Activated CD8-positive, alpha-beta memory T cell treated with anti-CD3 and anti-CD28 coated beads, Interleukin-2, amount 10 ng/mL, durations not matched to agents 7 days and 5 days (primary cell): ENCODE measurements at regions of chr19 and their contacts with region 1.

Region 1: DNA sequence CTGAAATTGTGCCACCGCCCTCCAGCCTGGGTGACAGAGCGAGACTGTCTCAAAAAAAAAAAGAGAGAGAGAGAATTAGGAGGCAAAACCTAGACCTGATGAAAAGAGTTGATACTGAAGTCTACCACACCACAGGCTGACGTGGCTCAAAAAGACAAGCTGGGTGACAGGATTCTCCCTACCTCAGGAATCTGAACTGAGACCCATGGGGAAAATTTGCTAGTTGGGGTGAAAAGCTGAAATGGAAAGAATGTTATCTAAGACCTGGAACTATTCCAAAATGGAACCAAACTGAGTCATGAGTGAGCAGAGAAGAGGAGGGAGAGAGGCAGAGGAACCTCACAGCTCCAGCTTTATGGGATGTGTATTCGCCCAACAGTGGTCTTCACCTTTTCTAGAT is 11.7 kb downstream of the SMG9 start:
- DNase-seq: no peak
- ATAC-seq: no peak
- H3K4me3 Mint-ChIP-seq: no peak overlapping the region
- H3K27ac Mint-ChIP-seq: no peak overlapping the region
- H3K4me1 Mint-ChIP-seq: peaks cover 31% of the 10 kb centered on the region
- H3K27me3 Mint-ChIP-seq: no peaks in the 10 kb centered on the region

Region 2: GRCh38 chr19:43754503-43755255 is 11.7 kb after region 1 on chr19 and contains the start of gene SMG9:
- CTCF ChIA-PET with region 1: interaction called, 48 read pairs
- DNase-seq: peak; percentile 98
- ATAC-seq: peak; percentile 87
- H3K4me3 Mint-ChIP-seq: peak within 1 kb of the TSS; percentile 89
- H3K27ac Mint-ChIP-seq: peak within 1 kb of the TSS; percentile 98
- H3K4me1 Mint-ChIP-seq: peaks cover 65% of the 10 kb centered on the region
- H3K27me3 Mint-ChIP-seq: no peaks in the 10 kb centered on the region
- total RNA-seq, gene SMG9: 62.3 to 74.7 TPM

Region 3: DNA sequence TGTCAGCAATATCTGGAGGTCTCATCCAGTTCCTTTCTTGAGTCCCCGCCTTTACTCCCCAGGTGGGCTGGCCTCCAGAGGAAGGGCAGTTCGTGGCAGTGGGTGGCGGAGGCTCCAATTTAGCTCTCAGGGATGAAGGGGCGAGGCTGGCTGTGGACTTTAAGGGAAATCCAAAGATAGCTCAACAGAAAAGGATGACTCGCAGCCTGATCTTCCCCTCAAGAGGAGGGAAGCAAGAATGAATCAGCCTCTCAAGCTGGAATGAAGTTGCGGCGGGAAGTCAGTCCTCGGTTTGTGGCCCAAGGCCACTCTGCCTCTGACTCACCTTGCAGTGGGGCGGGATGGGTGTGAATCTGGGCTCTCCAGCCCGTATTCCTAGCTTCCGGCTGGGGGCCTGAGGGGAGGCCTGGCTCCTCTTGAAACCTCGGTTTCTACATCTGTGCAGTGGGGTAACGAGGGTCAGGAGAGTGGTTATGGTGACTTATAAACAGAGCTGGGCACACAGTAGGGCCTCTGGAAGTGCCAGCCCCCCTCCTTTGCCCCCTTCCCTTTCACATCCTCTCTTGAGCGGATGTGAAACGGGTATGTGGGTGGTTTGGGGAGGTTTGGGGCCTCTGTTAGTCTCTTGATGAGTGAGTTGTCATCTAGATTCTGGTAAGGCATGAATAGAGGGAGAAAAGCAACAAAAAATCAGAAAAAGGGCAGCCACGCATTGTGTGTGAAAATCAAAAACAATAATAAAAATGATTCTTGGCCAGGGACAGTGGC is 22.3 kb after region 1 on chr19:
- CTCF ChIA-PET with region 1: interaction called, 71 read pairs
- DNase-seq: peak; percentile 96
- ATAC-seq: peak; percentile 88
- H3K4me3 Mint-ChIP-seq: peak overlapping the region; percentile 49
- H3K27ac Mint-ChIP-seq: peak overlapping the region; percentile 94
- H3K4me1 Mint-ChIP-seq: peaks cover 55% of the 10 kb centered on the region
- H3K27me3 Mint-ChIP-seq: no peaks in the 10 kb centered on the region

Region 4: GRCh38 chr19:43784981-43785808 is 42.2 kb after region 1 on chr19:
- CTCF ChIA-PET with region 1: interaction called, 68 read pairs
- DNase-seq: peak; percentile 76
- ATAC-seq: peak; percentile 46
- H3K4me3 Mint-ChIP-seq: peak overlapping the region; percentile 25
- H3K27ac Mint-ChIP-seq: peak overlapping the region; percentile 87
- H3K4me1 Mint-ChIP-seq: peaks cover 41% of the 10 kb centered on the region
- H3K27me3 Mint-ChIP-seq: peaks cover 7% of the 10 kb centered on the region

Region 5: DNA sequence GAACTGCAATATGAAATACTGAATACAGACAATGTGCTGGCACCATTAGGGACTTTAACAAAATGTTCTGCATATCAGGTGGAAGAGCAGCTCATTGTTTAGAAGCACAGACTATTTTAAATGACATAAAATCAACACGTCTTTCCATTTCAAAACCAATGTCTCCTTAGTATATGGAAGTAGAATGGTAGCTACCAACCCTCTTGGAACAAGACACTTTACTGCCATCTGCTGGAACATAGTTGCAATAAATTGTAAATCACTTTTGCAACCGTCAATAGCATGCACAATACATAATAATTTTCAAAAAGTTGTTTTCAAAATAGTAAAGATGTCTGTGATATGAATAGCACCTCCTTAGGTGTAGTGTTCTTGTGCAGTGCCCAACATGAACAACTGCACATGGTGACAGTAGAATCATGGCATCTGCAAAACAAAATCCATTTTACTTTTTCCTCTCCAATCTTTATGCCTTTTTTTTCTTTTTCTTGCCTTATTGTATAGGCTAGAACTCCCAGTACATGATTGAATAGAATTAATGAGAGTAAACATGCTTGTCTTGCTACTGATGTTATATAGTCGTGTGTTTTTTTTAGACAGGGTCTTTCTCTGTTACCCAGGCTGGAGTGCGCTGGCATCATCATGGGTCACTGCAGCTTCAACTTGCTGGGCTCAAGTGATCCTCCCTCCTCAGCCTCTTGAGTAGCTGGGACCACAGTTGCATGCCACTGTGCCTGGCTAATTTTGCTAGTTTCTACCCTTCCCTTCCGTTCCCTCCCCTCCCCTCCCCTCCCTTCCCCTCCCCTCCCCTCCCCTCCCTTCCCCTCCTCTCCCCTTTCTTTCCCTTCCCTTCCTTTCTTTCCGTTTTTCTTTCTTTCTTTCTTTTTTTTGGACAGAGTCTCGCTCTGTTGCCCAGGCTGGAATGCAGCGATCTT is 67.0 kb after region 1 on chr19:
- CTCF ChIA-PET with region 1: interaction called, 28 read pairs
- DNase-seq: no peak
- ATAC-seq: peak; percentile 64
- H3K4me3 Mint-ChIP-seq: no peak overlapping the region
- H3K27ac Mint-ChIP-seq: no peak overlapping the region
- H3K4me1 Mint-ChIP-seq: no peaks in the 10 kb centered on the region
- H3K27me3 Mint-ChIP-seq: peaks cover 26% of the 10 kb centered on the region